Activated B cell treated with CpG ODN at 0.5 μM for 24 hours (primary cell): ENCODE measurements at regions of chr1 and their contacts with region 1.

Region 1: GRCh38 chr1:247390116-247390791 is 25.7 kb upstream of the NLRP3 start:
- DNase-seq: peak; percentile 75
- ATAC-seq: peak; percentile 99
- H3K4me3 Mint-ChIP-seq: peak overlapping the region; percentile 60
- H3K27ac Mint-ChIP-seq: peak overlapping the region; percentile 75
- H3K4me1 Mint-ChIP-seq: peaks cover 22% of the 10 kb centered on the region
- H3K27me3 Mint-ChIP-seq: no peaks in the 10 kb centered on the region
- CTCF ChIP-seq: no peak

Region 2: DNA sequence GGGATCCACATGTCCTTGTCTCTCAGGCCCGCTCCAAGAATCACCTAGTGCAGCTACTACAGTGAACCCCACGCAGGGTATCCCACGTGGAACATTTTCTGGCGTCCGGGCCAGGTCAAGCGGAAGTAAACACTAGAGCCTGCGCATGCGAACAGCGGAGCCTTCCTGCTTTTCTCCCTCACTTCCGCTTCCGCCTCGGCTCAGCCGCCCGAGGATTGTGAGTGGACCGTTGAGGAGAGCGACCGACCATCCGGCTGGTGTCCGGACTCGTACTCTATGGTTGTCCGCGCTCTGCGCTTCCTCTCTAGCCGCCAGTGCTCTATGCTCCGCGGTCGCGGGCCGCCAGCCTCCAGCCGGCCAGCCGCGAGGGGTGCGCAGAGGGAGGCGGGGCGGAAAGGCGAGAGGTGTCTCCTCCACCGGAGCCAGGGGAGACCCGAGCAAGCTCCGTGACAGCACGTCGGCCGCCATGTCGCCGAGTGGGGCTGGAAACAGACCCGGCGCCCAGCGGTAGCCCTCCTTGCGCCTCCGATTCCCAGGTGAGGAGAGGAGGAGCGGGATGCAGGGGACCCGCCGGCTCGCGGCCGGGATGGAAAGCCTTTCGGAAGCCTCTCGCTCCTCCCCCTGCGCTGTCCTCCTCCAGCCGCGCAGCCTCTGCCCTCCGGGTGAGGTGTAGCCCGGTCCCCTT is 824.0 kb before region 1 on chr1 and contains the starts of genes CNST and TFB2M:
- CTCF ChIA-PET with region 1: no interaction called
- POLR2A ChIA-PET with region 1: no interaction called
- intact Hi-C with region 1: loop called (anchors 2 kb)
- DNase-seq: peak; percentile 95
- ATAC-seq: peak; percentile 89
- H3K4me3 Mint-ChIP-seq: peak within 1 kb of the TSS; percentile 99
- H3K27ac Mint-ChIP-seq: peak within 1 kb of the TSS; percentile 97
- H3K4me1 Mint-ChIP-seq: peaks cover 60% of the 10 kb centered on the region
- H3K27me3 Mint-ChIP-seq: no peaks in the 10 kb centered on the region
- CTCF ChIP-seq: no peak
- total RNA-seq, gene CNST: 30.2 and 35.2 TPM in 2 replicates
- total RNA-seq, gene TFB2M: 15.9 and 18.3 TPM in 2 replicates

Region 3: DNA sequence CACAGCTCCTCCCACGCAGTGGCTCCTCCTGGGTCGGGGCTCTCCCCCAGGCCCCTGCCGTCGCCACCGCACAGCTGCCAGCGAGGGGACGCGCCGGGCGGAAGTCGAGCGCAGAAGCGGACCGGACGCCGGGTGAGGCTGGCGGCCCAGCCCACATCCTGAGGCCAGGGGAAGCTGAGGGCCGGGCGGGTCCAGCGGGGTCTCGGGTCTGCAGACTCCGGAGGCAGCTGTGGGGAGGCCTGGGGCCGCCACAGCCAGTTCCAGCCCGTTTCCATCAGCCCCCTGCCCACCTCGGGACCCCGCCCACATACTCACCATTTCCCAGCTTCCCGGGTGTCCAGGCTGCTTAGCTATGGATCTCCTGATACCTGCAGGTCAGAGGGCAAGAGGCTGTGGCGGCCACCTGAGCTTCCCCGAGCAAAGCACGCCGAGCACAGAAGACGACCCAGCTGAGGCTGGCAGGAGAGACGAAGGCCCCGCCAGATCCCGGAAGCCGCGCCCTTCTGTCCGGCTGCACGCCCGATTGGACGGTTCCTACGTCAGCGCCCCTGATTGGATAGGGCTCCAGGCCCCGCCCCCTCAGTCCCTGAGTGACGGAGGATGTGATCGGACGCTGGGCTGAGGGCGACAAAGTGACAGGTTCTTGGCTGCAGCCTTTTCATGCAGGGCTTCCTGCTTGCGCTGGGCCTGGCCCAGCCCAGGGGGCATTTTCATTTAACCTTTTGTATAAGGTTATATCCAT is 179.7 kb before region 1 on chr1:
- CTCF ChIA-PET with region 1: interaction called, 7 read pairs
- POLR2A ChIA-PET with region 1: interaction called, 12 read pairs
- intact Hi-C with region 1: no loop called
- DNase-seq: peak; percentile 91
- ATAC-seq: peak; percentile 98
- H3K4me3 Mint-ChIP-seq: peak overlapping the region; percentile 95
- H3K27ac Mint-ChIP-seq: peak overlapping the region; percentile 94
- H3K4me1 Mint-ChIP-seq: peaks cover 63% of the 10 kb centered on the region
- H3K27me3 Mint-ChIP-seq: no peaks in the 10 kb centered on the region
- CTCF ChIP-seq: no peak

Region 4: DNA sequence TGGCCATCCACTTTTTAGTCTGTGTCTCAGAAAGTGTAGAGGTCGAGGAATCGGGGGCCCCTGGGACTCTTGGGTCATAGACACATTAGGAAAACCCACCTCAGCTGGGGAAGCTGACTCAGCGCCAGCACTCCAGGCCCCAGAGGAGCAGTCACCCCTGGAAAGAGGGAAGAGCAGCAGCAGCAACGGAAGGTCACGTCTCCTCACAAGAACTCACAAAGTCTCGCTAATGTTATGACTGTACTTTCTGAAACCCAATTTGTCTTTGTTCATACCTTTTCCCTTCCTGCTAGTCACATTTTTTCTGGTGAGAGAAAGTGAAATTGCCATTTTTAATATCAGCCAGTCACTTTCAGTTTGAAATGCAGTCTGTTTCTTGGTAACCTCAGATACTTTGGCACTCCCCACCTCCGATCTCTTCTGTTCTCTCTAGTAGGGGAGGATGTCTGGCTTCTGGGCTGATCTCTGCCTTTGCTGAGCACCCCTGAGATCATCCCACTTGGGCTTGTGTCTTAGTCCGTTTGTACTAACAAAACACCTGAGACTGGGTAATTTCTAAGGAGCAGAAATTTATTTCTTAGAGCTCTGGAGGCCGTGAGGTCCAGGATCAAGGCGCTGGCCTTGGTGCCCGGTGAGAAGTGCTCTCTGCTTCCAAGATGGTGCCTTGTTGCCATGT is 19.8 kb after region 1 on chr1:
- CTCF ChIA-PET with region 1: interaction called, 13 read pairs
- POLR2A ChIA-PET with region 1: interaction called, 5 read pairs
- intact Hi-C with region 1: loop called (anchors 2 kb)
- DNase-seq: no peak
- ATAC-seq: peak; percentile 79
- H3K4me3 Mint-ChIP-seq: peak overlapping the region; percentile 63
- H3K27ac Mint-ChIP-seq: peak overlapping the region; percentile 69
- H3K4me1 Mint-ChIP-seq: peaks cover 33% of the 10 kb centered on the region
- H3K27me3 Mint-ChIP-seq: no peaks in the 10 kb centered on the region
- CTCF ChIP-seq: no peak

Region 5: GRCh38 chr1:247475793-247476192 is 85.5 kb after region 1 on chr1:
- CTCF ChIA-PET with region 1: interaction called, 29 read pairs
- POLR2A ChIA-PET with region 1: interaction called, 24 read pairs
- intact Hi-C with region 1: loop called (anchors 2 kb)
- DNase-seq: no peak
- ATAC-seq: no peak
- H3K4me3 Mint-ChIP-seq: no peak overlapping the region
- H3K27ac Mint-ChIP-seq: peak overlapping the region; percentile 95
- H3K4me1 Mint-ChIP-seq: peaks cover 40% of the 10 kb centered on the region
- H3K27me3 Mint-ChIP-seq: no peaks in the 10 kb centered on the region
- CTCF ChIP-seq: no peak

Region 6: DNA sequence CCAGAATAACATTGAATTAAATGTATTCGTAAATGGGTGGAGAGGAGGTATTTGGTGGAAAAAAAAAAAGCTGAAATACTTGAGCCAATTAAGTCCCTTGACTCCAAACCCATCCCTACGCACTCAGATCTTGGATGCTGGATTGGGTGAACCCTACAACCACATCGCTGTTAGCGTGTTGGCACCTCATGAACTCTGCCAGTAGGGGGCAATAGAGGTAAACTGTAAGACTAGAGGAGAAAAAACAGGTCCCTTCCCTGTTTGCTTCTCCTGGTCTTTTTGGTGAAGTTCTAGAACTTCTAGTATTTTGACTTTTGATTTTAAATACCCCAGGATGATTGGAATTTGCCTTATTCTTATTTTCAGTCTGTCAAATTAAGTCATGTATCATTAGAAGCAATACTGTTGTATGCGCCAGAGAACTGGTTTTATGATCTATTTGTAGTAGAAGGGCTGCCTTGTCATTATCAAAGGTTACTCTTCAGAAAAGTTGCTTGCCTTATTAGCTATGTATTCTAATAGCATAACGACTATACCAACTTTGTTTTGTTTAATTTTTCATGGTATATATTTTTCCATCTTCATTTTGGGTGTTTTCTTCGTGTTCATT is 291.1 kb after region 1 on chr1:
- CTCF ChIA-PET with region 1: no interaction called
- POLR2A ChIA-PET with region 1: no interaction called
- intact Hi-C with region 1: loop called (anchors 5 kb)
- DNase-seq: no peak
- ATAC-seq: peak; percentile 37
- H3K4me3 Mint-ChIP-seq: no peak overlapping the region
- H3K27ac Mint-ChIP-seq: no peak overlapping the region
- H3K4me1 Mint-ChIP-seq: peaks cover 1% of the 10 kb centered on the region
- H3K27me3 Mint-ChIP-seq: peaks cover 2% of the 10 kb centered on the region
- CTCF ChIP-seq: no peak